ENCODE measurements at regions of chr11 and their contacts with region 1.

Region 1: DNA sequence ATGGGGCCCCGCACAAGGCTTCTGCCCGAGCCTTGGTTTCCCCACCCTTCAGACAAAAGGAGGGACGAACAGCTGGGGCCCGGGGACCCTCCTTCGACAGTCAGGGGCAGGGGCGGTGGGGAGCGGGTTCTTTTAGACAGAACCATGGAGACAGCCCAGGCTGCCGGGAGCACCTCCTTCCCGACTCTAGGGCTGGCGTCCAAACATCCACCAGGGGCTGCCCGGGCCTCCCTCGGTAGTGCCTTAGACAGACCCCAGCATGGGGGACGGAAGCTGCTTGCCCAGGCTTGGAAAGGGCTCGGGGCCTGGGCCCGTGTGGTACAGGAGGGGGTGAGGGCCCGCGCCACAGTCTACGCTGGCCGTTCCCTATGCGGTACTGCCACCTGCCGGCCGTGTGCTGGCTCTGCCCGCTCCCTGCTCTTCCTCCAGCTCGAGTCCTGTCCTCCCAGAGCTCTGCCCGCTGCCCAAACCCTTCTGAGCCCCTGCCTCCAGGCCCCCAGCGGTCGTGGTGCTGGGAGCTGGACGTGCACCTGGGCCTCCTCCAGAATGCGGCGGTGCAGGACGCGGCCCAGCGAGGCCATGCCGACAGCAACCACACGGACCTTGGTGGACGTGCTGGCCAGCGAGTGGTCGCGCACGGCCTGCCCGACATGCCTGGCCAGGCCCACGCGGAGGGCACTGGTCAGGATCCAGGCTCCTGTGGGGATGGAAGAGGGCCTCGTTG is 20.1 kb downstream of the TSSC4 start:
- DNase-seq: peak; percentile 99
- H3K4me3 ChIP-seq: no peak overlapping the region; a peak in 1 of 4 replicates
- H3K27ac ChIP-seq: no peak overlapping the region
- H3K4me1 ChIP-seq: no peaks in the 10 kb centered on the region; a peak in 1 of 4 replicates
- H3K27me3 ChIP-seq: no peaks in the 10 kb centered on the region
- CTCF ChIP-seq: peak; percentile 85
- EP300 ChIP-seq: no peak
- RAD21 ChIP-seq: peak; percentile 91

Region 2: GRCh38 chr11:2186669-2187279 is 233.9 kb before region 1 on chr11:
- CTCF ChIA-PET with region 1: interaction called, 138 read pairs
- POLR2A ChIA-PET with region 1: no interaction called
- DNase-seq: peak; percentile 80
- H3K4me3 ChIP-seq: no peak overlapping the region
- H3K27ac ChIP-seq: no peak overlapping the region; a peak in 1 of 4 replicates
- H3K4me1 ChIP-seq: peaks cover 0 to 39% of the 10 kb centered on the region in 2 experiments; a peak in 1 of 4 replicates
- H3K27me3 ChIP-seq: no peaks in the 10 kb centered on the region
- CTCF ChIP-seq: peak; percentile 17; the same call in 1 of the 2 replicates
- EP300 ChIP-seq: no peak
- RAD21 ChIP-seq: peak; percentile 73

Region 3: DNA sequence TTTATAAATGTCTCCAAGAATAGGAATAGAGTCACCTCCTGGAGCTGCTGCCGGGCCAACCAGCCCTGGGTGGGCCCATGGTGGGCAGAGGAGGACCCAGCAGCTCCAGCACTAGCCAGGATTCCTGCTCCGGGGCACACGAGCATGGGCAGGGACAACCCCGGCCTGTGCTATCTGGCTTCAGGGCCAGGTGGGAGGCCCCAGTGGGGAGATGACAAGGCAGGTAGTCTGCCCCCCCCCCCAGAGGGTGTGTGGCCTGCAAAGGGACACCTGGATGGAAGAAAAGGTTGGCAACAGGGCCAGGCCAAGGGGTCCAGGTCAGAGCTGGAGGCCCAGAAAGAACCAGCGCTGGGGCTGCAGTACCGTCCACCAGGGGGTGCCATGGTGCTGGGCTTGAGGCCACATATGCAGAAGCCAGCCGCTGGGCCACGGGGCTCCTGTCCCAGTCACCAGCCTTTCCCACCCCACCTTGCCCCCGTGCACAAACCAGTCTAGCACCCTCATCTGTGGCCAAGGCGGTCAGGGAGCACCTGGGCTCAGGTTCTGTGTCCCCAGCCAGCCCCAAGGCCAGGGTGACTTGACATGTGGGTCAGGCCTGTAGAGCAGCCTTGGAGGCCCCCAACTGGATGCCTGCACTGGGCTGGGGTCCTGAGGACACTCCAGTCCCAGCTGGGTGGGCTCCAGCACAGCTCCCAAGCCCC is 115.4 kb before region 1 on chr11:
- CTCF ChIA-PET with region 1: interaction called, 318 read pairs
- POLR2A ChIA-PET with region 1: interaction called, 4 read pairs
- DNase-seq: peak; percentile 85
- H3K4me3 ChIP-seq: peak overlapping the region in 1 of 2 experiments; percentile 27; a peak in 1 of 4 replicates
- H3K27ac ChIP-seq: peak overlapping the region; percentile 82 to 87; a peak in 3 of 4 replicates
- H3K4me1 ChIP-seq: peaks cover 12 to 48% of the 10 kb centered on the region in 2 experiments; a peak in 3 of 4 replicates
- H3K27me3 ChIP-seq: no peaks in the 10 kb centered on the region
- CTCF ChIP-seq: peak; percentile 85
- EP300 ChIP-seq: no peak
- RAD21 ChIP-seq: peak; percentile 88

Region 4: GRCh38 chr11:2382936-2383851 is 37.5 kb before region 1 on chr11:
- CTCF ChIA-PET with region 1: interaction called, 18 read pairs
- POLR2A ChIA-PET with region 1: no interaction called
- DNase-seq: no peak
- H3K4me3 ChIP-seq: no peak overlapping the region
- H3K27ac ChIP-seq: no peak overlapping the region; a peak in 2 of 4 replicates
- H3K4me1 ChIP-seq: peaks cover 9 to 35% of the 10 kb centered on the region in 2 experiments; a peak in 2 of 4 replicates
- H3K27me3 ChIP-seq: no peaks in the 10 kb centered on the region
- CTCF ChIP-seq: no peak
- EP300 ChIP-seq: no peak
- RAD21 ChIP-seq: no peak

Region 5: GRCh38 chr11:2433106-2433925 is 12.7 kb after region 1 on chr11:
- CTCF ChIA-PET with region 1: interaction called, 16 read pairs
- POLR2A ChIA-PET with region 1: no interaction called
- DNase-seq: no peak
- H3K4me3 ChIP-seq: no peak overlapping the region
- H3K27ac ChIP-seq: no peak overlapping the region
- H3K4me1 ChIP-seq: no peaks in the 10 kb centered on the region
- H3K27me3 ChIP-seq: no peaks in the 10 kb centered on the region
- CTCF ChIP-seq: no peak
- EP300 ChIP-seq: no peak
- RAD21 ChIP-seq: no peak

Region 6: DNA sequence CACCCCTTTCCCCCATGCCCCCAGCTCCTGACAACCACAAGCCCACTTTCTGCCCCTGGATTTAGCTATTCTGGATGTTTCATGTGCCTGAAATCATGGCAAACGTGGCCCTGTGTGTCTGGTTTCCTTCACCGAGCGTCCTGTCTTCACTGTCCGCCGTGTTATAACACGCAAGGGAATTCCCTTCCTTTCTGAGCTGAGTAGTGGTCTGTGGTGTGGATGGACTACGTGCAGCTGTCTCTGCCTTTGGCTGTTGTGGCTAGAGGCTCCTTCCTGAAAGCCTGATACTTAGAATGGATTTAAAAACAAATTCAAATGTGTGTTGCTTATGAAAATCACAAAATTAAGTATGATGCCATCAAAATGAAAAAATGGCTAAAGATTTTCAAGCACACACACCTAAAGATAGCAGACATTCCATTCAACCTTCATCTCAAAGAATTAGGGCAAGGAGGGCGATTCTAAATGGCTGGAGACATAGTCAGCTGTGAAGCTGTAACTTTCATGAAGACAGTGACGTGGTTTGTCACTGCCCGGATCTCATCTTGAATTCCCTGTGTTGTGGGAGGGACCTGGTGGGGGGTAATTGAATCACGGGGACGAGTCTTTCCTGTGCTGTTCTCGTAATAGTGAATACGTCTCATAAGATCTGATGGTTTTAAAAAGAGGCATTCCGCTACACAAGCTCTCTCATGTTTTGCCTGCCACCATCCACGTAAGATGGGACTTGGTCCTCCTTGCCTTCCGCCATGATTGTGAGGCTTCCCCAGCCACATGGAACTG is 54.7 kb after region 1 on chr11:
- CTCF ChIA-PET with region 1: no interaction called
- POLR2A ChIA-PET with region 1: no interaction called
- DNase-seq: no peak
- H3K4me3 ChIP-seq: no peak overlapping the region
- H3K27ac ChIP-seq: no peak overlapping the region
- H3K4me1 ChIP-seq: peaks cover 0 to 4% of the 10 kb centered on the region in 2 experiments; a peak in 1 of 4 replicates
- H3K27me3 ChIP-seq: no peaks in the 10 kb centered on the region
- CTCF ChIP-seq: no peak
- EP300 ChIP-seq: no peak
- RAD21 ChIP-seq: no peak

Region 7: GRCh38 chr11:2519862-2520735 is 99.4 kb after region 1 on chr11:
- CTCF ChIA-PET with region 1: interaction called, 461 read pairs
- POLR2A ChIA-PET with region 1: interaction called, 4 read pairs
- DNase-seq: peak; percentile 23
- H3K4me3 ChIP-seq: no peak overlapping the region
- H3K27ac ChIP-seq: no peak overlapping the region
- H3K4me1 ChIP-seq: peaks cover 0 to 5% of the 10 kb centered on the region in 2 experiments; a peak in 1 of 4 replicates
- H3K27me3 ChIP-seq: no peaks in the 10 kb centered on the region
- CTCF ChIP-seq: no peak
- EP300 ChIP-seq: no peak
- RAD21 ChIP-seq: no peak